Activated naive CD4-positive, alpha-beta T cell treated with anti-CD3 and anti-CD28 coated beads, Interleukin-2, amount 10 ng/mL, durations not matched to agents 7 days and 5 days (primary cell): ENCODE measurements at regions of chr2 and their contacts with region 1.

Region 1: DNA sequence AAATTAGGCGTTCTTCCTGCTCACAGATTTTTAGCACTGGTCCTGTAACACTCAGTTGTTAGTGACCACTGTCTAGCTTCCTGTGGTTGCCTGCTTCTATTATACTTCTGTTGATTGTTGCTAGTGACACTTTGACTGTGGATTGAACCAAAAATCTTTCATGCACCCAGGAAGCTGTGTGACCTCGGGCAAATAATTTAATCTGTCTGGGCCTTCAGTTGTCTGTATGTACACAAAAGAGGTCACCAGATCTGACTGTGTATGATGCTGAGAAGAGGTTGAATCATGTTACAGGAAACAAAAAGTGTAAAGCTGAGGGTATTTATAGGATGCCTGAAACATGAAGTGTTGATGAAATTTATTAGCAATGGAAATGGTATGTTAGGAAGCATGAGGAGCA is 12.7 kb downstream of the ICOS start:
- DNase-seq: no peak
- H3K4me3 Mint-ChIP-seq: peak overlapping the region; percentile 32
- H3K27ac Mint-ChIP-seq: peak overlapping the region; percentile 83
- H3K4me1 Mint-ChIP-seq: peaks cover 90% of the 10 kb centered on the region
- H3K27me3 Mint-ChIP-seq: no peaks in the 10 kb centered on the region

Region 2: DNA sequence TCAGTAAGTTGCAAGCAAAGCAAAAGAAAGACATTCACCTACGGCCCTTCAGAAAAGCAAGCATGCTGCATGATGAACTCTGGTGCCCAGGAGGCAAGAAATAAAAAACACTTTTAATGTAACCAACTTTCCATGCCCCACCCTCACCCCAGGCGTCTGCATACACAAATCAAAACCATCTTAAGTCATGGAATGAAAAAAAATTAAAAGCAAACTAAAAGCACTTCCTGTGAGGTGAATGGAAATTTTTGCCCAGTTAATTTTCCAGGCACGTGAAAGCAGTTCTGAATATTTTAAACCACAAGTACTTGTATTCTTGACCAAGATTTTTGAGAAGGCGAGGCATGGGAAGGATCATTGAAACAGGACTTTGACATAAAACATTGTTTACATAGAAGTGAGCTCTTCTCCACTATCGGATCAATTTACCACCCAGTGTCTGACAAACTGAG is 15.2 kb before region 1 on chr2:
- CTCF ChIA-PET with region 1: interaction called, 16 read pairs
- DNase-seq: peak; percentile 62
- H3K4me3 Mint-ChIP-seq: peak overlapping the region; percentile 62
- H3K27ac Mint-ChIP-seq: peak overlapping the region; percentile 96
- H3K4me1 Mint-ChIP-seq: peaks cover 51% of the 10 kb centered on the region
- H3K27me3 Mint-ChIP-seq: no peaks in the 10 kb centered on the region

Region 3: GRCh38 chr2:204024503-204024902 is 75.3 kb after region 1 on chr2:
- CTCF ChIA-PET with region 1: interaction called, 11 read pairs
- DNase-seq: peak; percentile 46
- H3K4me3 Mint-ChIP-seq: no peak overlapping the region
- H3K27ac Mint-ChIP-seq: no peak overlapping the region
- H3K4me1 Mint-ChIP-seq: peaks cover 49% of the 10 kb centered on the region
- H3K27me3 Mint-ChIP-seq: no peaks in the 10 kb centered on the region